CD14-positive monocyte (primary cell): ENCODE measurements at regions of chr16 and their contacts with region 1.

Region 1: GRCh38 chr16:129075-129474 is 9.4 kb downstream of the NPRL3 start:
- DNase-seq: no peak
- H3K4me3 ChIP-seq: no peak overlapping the region
- H3K4me3 Mint-ChIP-seq: no peak overlapping the region
- H3K27ac ChIP-seq: no peak overlapping the region
- H3K27ac Mint-ChIP-seq: no peak overlapping the region
- H3K4me1 ChIP-seq: no peaks in the 10 kb centered on the region
- H3K4me1 Mint-ChIP-seq: no peaks in the 10 kb centered on the region
- H3K27me3 ChIP-seq: no peaks in the 10 kb centered on the region
- H3K27me3 Mint-ChIP-seq: no peaks in the 10 kb centered on the region
- CTCF ChIP-seq: no peak

Region 2: GRCh38 chr16:175011-175919 is 46.2 kb after region 1 on chr16:
- intact Hi-C with region 1: loop called in 1 of 2 experiments (anchors 2 kb)
- DNase-seq: no peak
- H3K4me3 ChIP-seq: no peak overlapping the region
- H3K4me3 Mint-ChIP-seq: peak overlapping the region in 1 of 2 donors; percentile 75
- H3K27ac ChIP-seq: no peak overlapping the region
- H3K27ac Mint-ChIP-seq: no peak overlapping the region
- H3K4me1 ChIP-seq: peaks cover 0 to 3% of the 10 kb centered on the region in 2 donors
- H3K4me1 Mint-ChIP-seq: peaks cover 11% of the 10 kb centered on the region
- H3K27me3 ChIP-seq: peaks cover 49 to 69% of the 10 kb centered on the region in 2 donors
- H3K27me3 Mint-ChIP-seq: peaks cover 68 to 81% (median 77%) of the 10 kb centered on the region in 3 donors
- CTCF ChIP-seq: no peak